ENCODE measurements at regions of chr10 and their contacts with region 1.

Region 1: GRCh38 chr10:17454161-17455014 is at the start of gene ST8SIA6:
- DNase-seq: peak; percentile 37
- H3K4me3 Mint-ChIP-seq: peak within 1 kb of the TSS; percentile 87
- H3K27ac Mint-ChIP-seq: peak within 1 kb of the TSS; percentile 65
- H3K4me1 Mint-ChIP-seq: peaks cover 23% of the 10 kb centered on the region
- H3K27me3 Mint-ChIP-seq: peaks cover 37% of the 10 kb centered on the region
- total RNA-seq, gene ST8SIA6: not detected in 2 replicates

Region 2: DNA sequence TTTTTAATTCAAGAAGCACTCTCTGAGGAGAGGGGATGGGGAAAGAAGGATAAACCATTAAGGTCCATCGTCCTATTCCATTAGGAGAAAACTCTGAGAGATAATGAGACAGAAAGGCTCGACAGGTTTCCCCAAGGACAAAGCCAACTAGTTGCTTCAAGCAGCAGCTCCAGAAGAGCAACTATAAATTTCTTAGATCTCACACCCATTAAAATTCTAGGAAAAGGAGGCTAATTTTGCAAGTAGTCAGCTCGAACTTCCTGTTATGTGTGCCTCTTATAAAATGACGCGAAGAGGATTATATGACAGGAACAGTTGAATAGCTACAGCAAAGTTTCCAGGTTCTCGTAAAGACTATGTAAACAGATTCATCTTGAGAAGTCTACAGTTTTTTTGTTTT is 52.0 kb after region 1 on chr10:
- intact Hi-C with region 1: loop called (anchors 2 kb)
- DNase-seq: no peak
- H3K4me3 Mint-ChIP-seq: peak overlapping the region; percentile 32
- H3K27ac Mint-ChIP-seq: peak overlapping the region; percentile 58
- H3K4me1 Mint-ChIP-seq: peaks cover 36% of the 10 kb centered on the region
- H3K27me3 Mint-ChIP-seq: no peaks in the 10 kb centered on the region

Region 3: GRCh38 chr10:17586821-17587234 is 132.4 kb after region 1 on chr10:
- intact Hi-C with region 1: loop called (anchors 10 kb)
- DNase-seq: no peak
- H3K4me3 Mint-ChIP-seq: no peak overlapping the region
- H3K27ac Mint-ChIP-seq: no peak overlapping the region
- H3K4me1 Mint-ChIP-seq: peaks cover 7% of the 10 kb centered on the region
- H3K27me3 Mint-ChIP-seq: no peaks in the 10 kb centered on the region

Region 4: DNA sequence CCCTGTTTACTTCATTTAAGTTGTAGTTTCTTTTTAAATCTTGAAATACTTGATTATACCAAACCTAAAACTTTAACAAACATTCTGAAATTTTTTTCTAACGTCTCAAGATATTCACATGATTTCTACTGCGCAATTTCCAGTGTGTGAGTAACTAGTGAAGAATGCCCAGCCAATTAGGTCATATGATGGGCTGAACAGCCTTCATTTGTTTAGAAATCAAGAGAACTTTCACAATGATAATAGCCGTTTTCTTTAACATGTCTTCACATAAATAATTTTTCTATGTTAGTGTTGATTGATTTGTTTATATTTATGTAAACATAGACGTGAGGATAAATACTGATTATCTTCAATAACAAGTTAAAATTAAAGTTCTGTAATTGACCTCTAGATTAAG is 211.4 kb after region 1 on chr10:
- intact Hi-C with region 1: no loop called
- DNase-seq: no peak
- H3K4me3 Mint-ChIP-seq: no peak overlapping the region
- H3K27ac Mint-ChIP-seq: no peak overlapping the region
- H3K4me1 Mint-ChIP-seq: peaks cover 53% of the 10 kb centered on the region
- H3K27me3 Mint-ChIP-seq: no peaks in the 10 kb centered on the region